Naive thymus-derived CD8-positive, alpha-beta T cell (primary cell): ENCODE measurements at regions of chr19 and their contacts with region 1.

Region 1: DNA sequence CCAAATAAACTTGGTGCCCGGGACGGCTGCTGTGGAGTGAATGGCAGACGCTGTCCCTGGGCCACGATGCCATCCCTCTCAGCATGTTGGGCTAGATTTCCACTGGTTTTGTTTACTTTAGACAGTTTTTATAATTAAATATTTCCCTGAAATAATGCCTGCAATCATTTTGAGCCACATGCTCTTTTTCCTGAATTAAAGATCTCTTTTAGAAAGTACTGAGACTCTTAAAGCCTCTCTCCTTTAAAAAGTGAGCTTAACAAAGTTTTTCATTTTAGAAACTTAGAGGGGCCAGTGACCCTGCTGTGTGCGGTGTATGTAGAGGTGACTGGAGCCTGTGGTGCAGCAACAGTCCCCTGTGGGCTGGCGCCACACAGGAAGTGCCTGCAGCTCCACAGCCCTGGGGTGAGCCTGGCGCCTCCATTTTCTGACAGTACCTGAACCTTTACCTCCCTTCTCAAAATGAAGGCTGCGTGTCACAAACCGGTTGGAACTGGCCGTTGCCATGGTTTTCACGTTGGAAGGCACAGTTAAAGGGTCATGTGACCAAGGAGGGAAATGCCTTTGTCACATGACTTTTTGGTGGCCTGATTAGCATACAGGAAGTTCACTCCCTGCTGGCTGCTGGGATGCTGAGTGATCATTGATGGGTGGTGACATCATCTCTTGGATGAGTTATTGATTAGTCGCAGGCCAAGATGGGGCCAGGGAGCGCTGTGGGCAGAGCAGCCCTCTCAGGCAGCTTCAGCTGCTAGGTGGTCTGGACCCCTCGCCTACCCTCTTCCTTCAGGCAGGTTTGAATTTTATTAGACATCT is 26.3 kb downstream of the TSSK6 start:
- DNase-seq: peak; percentile 69 to 96 (median 90)
- ATAC-seq: peak; percentile 85 to 93
- H3K4me3 Mint-ChIP-seq: peak overlapping the region; percentile 67 to 83 (median 74)
- H3K27ac Mint-ChIP-seq: peak overlapping the region; percentile 97 to 99 (median 98)
- H3K4me1 Mint-ChIP-seq: peaks cover 22 to 64% (median 59%) of the 10 kb centered on the region in 4 donors
- H3K27me3 Mint-ChIP-seq: no peaks in the 10 kb centered on the region

Region 2: DNA sequence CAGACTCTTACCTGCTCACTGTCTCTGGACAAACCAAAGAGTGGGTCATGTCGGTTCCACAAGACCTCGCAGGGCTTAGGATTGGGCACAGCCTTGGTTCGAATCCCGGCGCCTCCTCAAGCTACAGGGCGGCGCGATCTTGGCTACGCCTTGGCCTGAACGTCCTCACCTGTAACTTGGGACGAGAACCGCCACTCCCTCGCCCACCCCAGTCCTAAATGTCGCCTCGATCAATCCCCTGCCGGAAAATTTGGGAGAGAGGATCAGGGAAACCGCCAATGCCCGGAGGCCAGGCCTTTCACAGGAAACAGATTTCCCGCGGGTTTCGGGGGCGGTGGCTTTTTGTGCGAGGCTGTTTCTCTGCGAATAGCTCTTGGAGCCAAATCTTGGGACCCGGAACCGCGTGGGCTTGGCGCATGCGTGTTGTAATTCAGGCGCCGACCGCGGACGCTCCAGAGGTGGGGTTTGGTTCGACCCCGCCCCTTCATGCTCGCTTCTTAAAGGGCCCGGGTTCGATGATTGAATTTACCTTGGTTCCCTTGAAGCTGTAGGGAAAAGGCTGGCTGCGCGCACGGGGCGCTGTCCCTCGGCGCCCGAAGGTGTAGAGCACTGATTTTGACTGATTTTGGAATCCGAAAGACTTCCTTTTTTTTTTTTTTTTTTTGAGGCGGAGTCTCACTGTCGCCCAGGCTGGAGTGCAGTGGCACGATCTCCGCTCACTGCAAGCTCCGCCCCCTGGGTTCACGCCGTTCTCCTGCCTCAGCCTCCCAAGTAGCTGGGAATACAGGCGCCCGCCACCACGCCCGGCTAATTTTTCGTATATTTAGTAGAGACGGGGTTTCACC is 285.8 kb before region 1 on chr19 and contains the start of gene NR2C2AP:
- POLR2A ChIA-PET with region 1: interaction called, 11 read pairs
- DNase-seq: peak; percentile 85 to 94 (median 88)
- ATAC-seq: peak; percentile 95
- H3K4me3 Mint-ChIP-seq: peak within 1 kb of the TSS; percentile 89 to 97 (median 92)
- H3K27ac Mint-ChIP-seq: peak within 1 kb of the TSS; percentile 88 to 96 (median 94)
- H3K4me1 Mint-ChIP-seq: peaks cover 17 to 42% (median 34%) of the 10 kb centered on the region in 4 donors
- H3K27me3 Mint-ChIP-seq: peaks cover 0 to 16% (median 4%) of the 10 kb centered on the region in 5 donors
- polyA plus RNA-seq, gene NR2C2AP: 23.7 to 37.8 (median 31.9) TPM

Region 3: GRCh38 chr19:19361075-19361594 is 127.9 kb before region 1 on chr19:
- POLR2A ChIA-PET with region 1: interaction called, 131 read pairs
- DNase-seq: peak; percentile 37 to 78 (median 64)
- ATAC-seq: peak; percentile 46 to 60
- H3K4me3 Mint-ChIP-seq: peak overlapping the region; percentile 12 to 62 (median 49)
- H3K27ac Mint-ChIP-seq: peak overlapping the region in 9 of 10 donors; percentile 28 to 86 (median 64)
- H3K4me1 Mint-ChIP-seq: peaks cover 21 to 52% (median 38%) of the 10 kb centered on the region in 4 donors
- H3K27me3 Mint-ChIP-seq: no peaks in the 10 kb centered on the region

Region 4: DNA sequence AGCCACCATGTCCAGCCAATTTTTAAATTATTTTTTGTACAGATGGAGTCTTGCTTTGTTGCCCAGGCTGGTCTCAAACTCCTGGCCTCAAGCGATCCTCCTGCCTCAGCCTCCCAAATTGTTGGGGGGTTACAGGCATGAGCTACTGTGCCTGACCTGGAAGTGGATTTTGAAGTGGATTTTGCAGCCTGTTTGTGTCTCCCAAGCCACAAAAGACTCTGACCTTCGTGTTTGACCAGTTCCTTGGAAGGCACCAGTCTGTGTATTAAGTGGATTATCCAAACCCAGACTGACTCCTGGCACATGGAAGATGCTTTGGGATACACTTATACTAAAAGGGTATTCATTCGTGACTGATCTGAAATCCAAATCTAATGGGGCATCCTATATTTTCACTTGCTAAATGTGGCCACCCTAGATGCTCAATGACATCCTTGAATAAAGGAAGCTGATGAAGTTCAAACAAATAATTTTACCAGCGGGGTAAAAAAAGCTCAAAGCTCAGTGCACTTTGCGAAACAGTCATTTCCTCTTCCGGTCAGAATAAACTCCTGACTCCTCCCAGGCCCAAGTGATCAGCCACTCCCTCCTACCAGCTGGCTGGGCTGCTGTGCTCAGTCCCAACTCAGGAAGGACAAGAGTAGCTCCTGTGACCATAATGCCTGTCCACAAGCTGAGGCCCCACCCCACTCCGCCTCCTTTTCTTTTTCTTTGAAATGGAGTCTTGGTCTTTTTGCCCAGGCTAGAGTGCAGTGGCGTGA is 116.2 kb before region 1 on chr19:
- POLR2A ChIA-PET with region 1: interaction called, 131 read pairs
- DNase-seq: peak in 3 of 10 donors; percentile 25 to 31 (median 26)
- ATAC-seq: peak; percentile 67 to 85
- H3K4me3 Mint-ChIP-seq: peak overlapping the region; percentile 12 to 74 (median 64)
- H3K27ac Mint-ChIP-seq: peak overlapping the region; percentile 25 to 94 (median 91)
- H3K4me1 Mint-ChIP-seq: peaks cover 4 to 15% (median 10%) of the 10 kb centered on the region in 4 donors
- H3K27me3 Mint-ChIP-seq: no peaks in the 10 kb centered on the region

Region 5: DNA sequence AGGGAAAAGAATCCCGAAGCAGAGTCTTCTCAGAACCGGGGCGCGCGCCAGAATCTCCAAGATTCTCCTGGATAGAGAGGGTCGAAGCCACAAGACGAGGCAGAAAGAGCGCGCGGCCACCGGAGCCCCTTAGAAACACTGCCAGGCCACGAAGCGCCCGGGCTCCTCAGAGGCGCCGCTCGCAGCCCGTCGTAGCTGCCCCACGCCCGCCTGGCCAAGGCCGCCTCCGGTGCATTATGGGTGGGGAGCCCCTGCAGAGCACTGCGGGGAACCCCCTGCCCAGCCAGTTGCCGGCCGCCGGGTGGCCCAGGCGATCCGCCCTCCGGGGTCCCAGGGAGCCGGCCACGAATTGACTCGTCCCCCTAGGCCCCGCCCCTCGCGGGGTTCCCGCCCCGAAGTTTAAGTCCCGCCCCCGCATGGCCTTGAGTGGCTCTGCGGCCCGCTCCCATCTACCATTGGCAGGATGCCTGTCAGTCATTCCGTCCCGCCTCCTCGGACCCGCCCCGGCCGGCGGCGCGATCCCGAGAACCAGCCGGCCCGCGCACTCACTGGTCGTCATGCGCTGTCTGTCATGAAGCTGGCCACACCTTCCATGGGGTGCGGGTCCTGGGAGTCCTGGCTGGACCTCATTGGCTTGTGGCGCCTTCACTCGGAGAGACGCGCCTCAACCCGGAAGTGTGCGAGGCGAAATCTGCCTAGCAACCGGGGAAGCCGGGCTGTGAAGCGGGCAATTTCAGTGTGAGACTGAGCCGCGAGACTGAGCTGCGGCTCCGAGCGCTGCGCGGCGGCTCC is 103.8 kb before region 1 on chr19:
- POLR2A ChIA-PET with region 1: interaction called, 23 read pairs
- DNase-seq: peak; percentile 97 to 100 (median 99)
- ATAC-seq: peak; percentile 90
- H3K4me3 Mint-ChIP-seq: peak overlapping the region; percentile 85 to 100 (median 92)
- H3K27ac Mint-ChIP-seq: peak overlapping the region; percentile 86 to 96 (median 94)
- H3K4me1 Mint-ChIP-seq: peaks cover 27 to 47% (median 44%) of the 10 kb centered on the region in 4 donors
- H3K27me3 Mint-ChIP-seq: no peaks in the 10 kb centered on the region

Region 6: GRCh38 chr19:19404879-19405860 is 83.9 kb before region 1 on chr19 and contains the start of gene GATAD2A:
- POLR2A ChIA-PET with region 1: interaction called, 52 read pairs
- DNase-seq: peak; percentile 82 to 95 (median 92)
- ATAC-seq: peak; percentile 79 to 80
- H3K4me3 Mint-ChIP-seq: peak within 1 kb of the TSS; percentile 90 to 98 (median 94)
- H3K27ac Mint-ChIP-seq: peak within 1 kb of the TSS; percentile 83 to 97 (median 94)
- H3K4me1 Mint-ChIP-seq: peaks cover 37 to 72% (median 64%) of the 10 kb centered on the region in 4 donors
- H3K27me3 Mint-ChIP-seq: no peaks in the 10 kb centered on the region
- polyA plus RNA-seq, gene GATAD2A: 14.5 to 35.1 (median 20.2) TPM

Region 7: GRCh38 chr19:19459707-19460251 is 29.3 kb before region 1 on chr19:
- POLR2A ChIA-PET with region 1: interaction called, 11 read pairs
- DNase-seq: peak in 9 of 10 donors; percentile 49 to 76 (median 57)
- ATAC-seq: peak; percentile 58 to 68
- H3K4me3 Mint-ChIP-seq: peak overlapping the region; percentile 80 to 97 (median 89)
- H3K27ac Mint-ChIP-seq: peak overlapping the region; percentile 93 to 99 (median 98)
- H3K4me1 Mint-ChIP-seq: peaks cover 38 to 93% (median 83%) of the 10 kb centered on the region in 4 donors
- H3K27me3 Mint-ChIP-seq: no peaks in the 10 kb centered on the region